Activated naive CD4-positive, alpha-beta T cell treated with anti-CD3 and anti-CD28 coated beads for 36 hours (primary cell): ENCODE measurements at regions of chr12 and their contacts with region 1.

Region 1: DNA sequence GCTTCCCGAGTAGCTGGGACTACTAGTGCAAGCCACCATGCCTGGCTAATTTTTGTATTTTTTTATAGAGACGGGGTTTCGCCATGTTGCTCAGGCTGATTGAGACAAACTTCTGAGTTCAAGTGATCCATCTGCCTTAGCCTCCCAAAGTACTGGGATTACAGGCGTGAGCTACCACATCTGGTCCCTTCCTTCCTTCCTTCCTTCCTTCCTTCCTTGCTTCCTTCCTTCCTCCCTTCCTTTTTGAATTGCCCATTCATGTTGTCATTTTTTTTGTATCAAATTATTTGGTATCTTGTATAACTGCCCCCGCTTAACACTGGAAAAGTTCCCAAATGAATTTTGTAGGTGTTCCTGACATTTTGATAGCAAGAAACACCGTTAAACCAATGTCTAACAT is 11.7 kb downstream of the RAD9B start:
- DNase-seq: no peak
- H3K4me3 Mint-ChIP-seq: no peak overlapping the region
- H3K27ac Mint-ChIP-seq: no peak overlapping the region
- H3K4me1 Mint-ChIP-seq: peaks cover 2% of the 10 kb centered on the region
- H3K27me3 Mint-ChIP-seq: no peaks in the 10 kb centered on the region

Region 2: DNA sequence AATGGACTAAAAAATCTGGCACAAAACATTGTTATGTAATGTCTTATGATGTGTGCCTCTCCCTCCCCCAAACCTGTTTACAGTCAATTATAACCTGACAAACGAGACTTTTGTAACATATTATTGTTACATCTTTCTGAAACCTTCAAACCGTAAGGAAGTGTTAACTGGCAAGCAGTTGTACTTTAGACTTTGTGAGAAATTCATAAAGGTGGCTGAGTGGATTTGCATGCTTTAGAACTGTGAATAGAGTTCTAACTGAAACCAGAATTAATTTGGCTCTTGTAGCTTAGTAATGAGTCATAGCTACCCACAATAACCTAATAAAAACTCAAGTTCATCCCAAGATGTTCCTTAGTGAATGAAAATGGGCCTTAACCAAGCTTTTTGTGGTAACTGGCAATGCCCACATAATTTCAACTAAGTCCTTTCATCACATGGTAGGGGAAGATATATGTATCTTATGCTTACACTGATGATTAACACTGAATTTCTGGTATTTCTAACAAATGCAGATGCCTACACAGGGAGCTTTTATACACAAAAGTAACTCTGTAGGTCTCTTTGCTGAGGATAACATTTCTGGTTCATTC is 18.0 kb after region 1 on chr12:
- CTCF ChIA-PET with region 1: interaction called, 26 read pairs
- intact Hi-C with region 1: no loop called
- DNase-seq: no peak
- H3K4me3 Mint-ChIP-seq: no peak overlapping the region
- H3K27ac Mint-ChIP-seq: peak overlapping the region; percentile 37
- H3K4me1 Mint-ChIP-seq: peaks cover 28% of the 10 kb centered on the region
- H3K27me3 Mint-ChIP-seq: no peaks in the 10 kb centered on the region

Region 3: GRCh38 chr12:110639336-110640141 is 125.7 kb after region 1 on chr12:
- CTCF ChIA-PET with region 1: no interaction called
- intact Hi-C with region 1: no loop called
- DNase-seq: no peak
- H3K4me3 Mint-ChIP-seq: no peak overlapping the region
- H3K27ac Mint-ChIP-seq: no peak overlapping the region
- H3K4me1 Mint-ChIP-seq: peaks cover 28% of the 10 kb centered on the region
- H3K27me3 Mint-ChIP-seq: no peaks in the 10 kb centered on the region

Region 4: GRCh38 chr12:110698171-110698902 is 184.5 kb after region 1 on chr12:
- CTCF ChIA-PET with region 1: interaction called, 3 read pairs
- intact Hi-C with region 1: loop called (anchors 5 kb)
- DNase-seq: peak; percentile 90
- H3K4me3 Mint-ChIP-seq: no peak overlapping the region
- H3K27ac Mint-ChIP-seq: peak overlapping the region; percentile 57
- H3K4me1 Mint-ChIP-seq: peaks cover 17% of the 10 kb centered on the region
- H3K27me3 Mint-ChIP-seq: no peaks in the 10 kb centered on the region

Region 5: DNA sequence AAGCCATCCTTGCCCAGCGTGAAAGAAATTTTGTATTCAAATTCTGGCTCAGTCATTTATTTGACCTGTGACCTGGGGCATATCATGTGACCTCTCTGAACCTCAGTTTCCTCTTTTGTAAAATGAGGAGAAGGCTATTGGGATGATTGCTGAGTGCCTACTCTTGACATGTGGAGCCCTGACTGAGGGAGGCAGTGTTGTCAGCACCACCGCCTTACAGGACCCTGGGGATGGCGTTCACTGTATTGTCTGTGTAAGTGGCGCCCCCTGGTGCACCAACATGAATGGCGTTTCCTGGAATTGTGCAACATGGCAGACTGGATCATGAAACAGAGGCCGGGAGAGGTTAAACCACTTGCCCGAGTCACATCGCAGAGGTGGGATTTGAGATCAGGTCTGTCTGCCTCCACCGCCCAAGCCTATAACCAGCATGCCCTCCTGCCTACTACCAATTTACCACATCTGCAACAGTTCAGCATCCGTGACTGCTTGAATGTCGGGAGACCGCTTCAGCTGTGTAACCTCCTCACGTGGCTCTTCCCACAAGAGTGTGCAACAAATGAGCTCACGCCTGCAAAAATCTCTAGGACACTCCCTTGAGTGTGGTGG is 312.9 kb after region 1 on chr12:
- CTCF ChIA-PET with region 1: no interaction called
- intact Hi-C with region 1: loop called (anchors 2 kb)
- DNase-seq: peak; percentile 97
- H3K4me3 Mint-ChIP-seq: peak overlapping the region; percentile 7
- H3K27ac Mint-ChIP-seq: peak overlapping the region; percentile 50
- H3K4me1 Mint-ChIP-seq: peaks cover 15% of the 10 kb centered on the region
- H3K27me3 Mint-ChIP-seq: no peaks in the 10 kb centered on the region